H1 (cell line): ENCODE measurements at regions of chr17 and their contacts with region 1.

Region 1: GRCh38 chr17:32286518-32286900 is 20.9 kb downstream of the RHBDL3 start:
- DNase-seq: no peak
- H3K4me3 ChIP-seq: no peak overlapping the region
- H3K27ac ChIP-seq: no peak overlapping the region
- H3K4me1 ChIP-seq: peaks cover 14 to 32% (median 24%) of the 10 kb centered on the region in 4 experiments
- H3K27me3 ChIP-seq: no peaks in the 10 kb centered on the region; a peak in 1 of 7 replicates
- CTCF ChIP-seq: no peak
- EP300 ChIP-seq: no peak
- POLR2A ChIP-seq: no peak
- RAD21 ChIP-seq: no peak

Region 2: GRCh38 chr17:32215696-32216095 is 70.8 kb before region 1 on chr17:
- CTCF ChIA-PET with region 1: no interaction called
- POLR2A ChIA-PET with region 1: no interaction called
- DNase-seq: no peak
- H3K4me3 ChIP-seq: no peak overlapping the region
- H3K27ac ChIP-seq: no peak overlapping the region
- H3K4me1 ChIP-seq: no peaks in the 10 kb centered on the region
- H3K27me3 ChIP-seq: no peaks in the 10 kb centered on the region
- CTCF ChIP-seq: no peak
- EP300 ChIP-seq: no peak
- POLR2A ChIP-seq: no peak
- RAD21 ChIP-seq: no peak

Region 3: GRCh38 chr17:32302860-32303649 is 16.5 kb after region 1 on chr17:
- CTCF ChIA-PET with region 1: interaction called, 10 read pairs
- POLR2A ChIA-PET with region 1: interaction called, 8 read pairs
- DNase-seq: peak in 1 of 2 experiments; percentile 70
- H3K4me3 ChIP-seq: peak overlapping the region in 2 of 4 experiments; percentile 5 to 22; a peak in 3 of 8 replicates
- H3K27ac ChIP-seq: peak overlapping the region; percentile 68; the same call in 1 of the 2 replicates
- H3K4me1 ChIP-seq: peaks cover 17 to 35% (median 21%) of the 10 kb centered on the region in 4 experiments
- H3K27me3 ChIP-seq: no peaks in the 10 kb centered on the region
- CTCF ChIP-seq: no peak
- EP300 ChIP-seq: peak in 1 of 2 experiments; percentile 41; a peak in 1 of 3 replicates
- POLR2A ChIP-seq: 0 out of 3 replicates have a peak, but pooled peaks of 1 of the 2 experiments have one; percentile 12
- RAD21 ChIP-seq: no peak

Region 4: DNA sequence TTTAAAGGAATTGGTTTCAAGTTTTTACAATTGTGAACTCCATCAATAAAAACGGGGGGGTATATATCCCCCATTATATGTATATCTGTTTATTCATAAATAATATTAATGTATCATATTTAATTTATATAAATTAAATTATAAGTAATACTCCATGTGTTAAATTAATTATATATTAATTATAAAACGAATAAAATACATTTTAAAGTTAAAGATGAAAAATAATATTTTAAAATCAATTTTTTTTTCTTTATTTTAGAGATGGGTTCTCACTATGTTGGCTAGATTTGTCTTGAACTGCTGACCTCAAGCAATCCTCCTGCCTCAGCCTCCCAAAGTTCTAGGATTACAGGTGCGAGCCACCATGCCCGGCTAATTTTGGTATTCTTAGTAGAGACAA is 140.4 kb after region 1 on chr17:
- CTCF ChIA-PET with region 1: no interaction called
- POLR2A ChIA-PET with region 1: no interaction called
- DNase-seq: no peak
- H3K4me3 ChIP-seq: no peak overlapping the region
- H3K27ac ChIP-seq: no peak overlapping the region
- H3K4me1 ChIP-seq: no peaks in the 10 kb centered on the region
- H3K27me3 ChIP-seq: no peaks in the 10 kb centered on the region
- CTCF ChIP-seq: no peak
- EP300 ChIP-seq: no peak
- POLR2A ChIP-seq: no peak
- RAD21 ChIP-seq: no peak